HEK293T (cell line): ENCODE measurements at regions of chr5 and their contacts with region 1.

Region 1: DNA sequence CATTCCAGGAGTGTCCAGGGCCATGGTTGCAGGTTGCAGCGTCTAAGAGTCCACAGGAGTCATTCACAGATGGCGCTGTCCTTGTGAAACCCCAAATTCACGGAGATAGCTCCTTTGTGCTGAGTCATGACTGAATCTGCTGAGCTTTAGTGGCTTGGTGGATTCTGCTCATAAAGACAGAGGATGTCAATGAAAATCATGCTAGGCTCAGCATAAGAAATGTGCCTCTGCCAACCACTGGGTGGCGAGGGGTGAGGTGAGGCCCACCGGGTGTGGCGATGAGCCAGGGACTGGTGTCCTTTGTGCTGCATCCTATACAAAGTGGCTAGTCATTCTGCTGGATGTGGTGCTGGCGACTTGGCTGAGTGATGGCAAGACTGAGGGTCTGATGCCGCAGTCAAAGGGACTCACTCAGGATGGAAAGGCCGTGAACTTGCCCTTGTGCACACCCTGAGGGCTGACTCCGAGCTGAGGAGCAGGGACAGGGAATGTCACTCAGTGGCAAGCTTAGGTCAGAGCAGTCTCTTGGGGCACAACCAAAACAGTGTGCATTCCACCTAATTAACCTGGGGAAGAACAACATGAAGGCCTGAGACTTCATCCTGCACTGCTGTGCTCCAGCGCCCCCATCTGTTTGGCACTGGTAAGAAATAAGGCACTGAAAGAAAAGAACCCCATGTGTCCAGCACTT is 71.5 kb downstream of the DAP start:
- DNase-seq: peak; percentile 31

Region 2: DNA sequence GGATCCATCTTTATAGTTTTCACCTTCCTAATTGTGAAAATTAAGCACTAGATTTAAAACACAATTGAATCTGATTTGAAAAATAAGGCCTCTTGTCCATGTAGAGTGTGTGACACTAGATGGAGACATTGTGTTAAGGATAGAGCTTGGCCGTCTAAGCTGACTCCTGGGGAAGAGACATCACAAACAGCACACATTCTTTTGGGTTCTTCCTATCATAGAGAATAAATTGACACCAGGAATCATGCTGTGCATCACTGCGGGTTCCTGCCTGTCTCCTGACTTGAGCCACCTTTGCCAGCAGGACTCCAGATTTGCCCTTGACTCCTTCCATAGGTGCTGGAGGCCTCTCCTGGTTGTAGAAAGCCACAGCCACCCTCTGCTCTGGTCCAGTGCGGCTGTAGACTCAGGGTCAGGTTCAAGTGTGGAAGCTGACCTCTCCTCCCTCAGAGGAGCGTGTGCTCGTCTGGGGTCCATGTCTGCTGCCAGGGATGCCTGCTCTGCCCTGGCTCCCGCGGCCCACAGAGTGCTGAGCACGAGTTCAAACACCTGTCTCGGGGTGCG is 236.7 kb before region 1 on chr5:
- CTCF ChIA-PET with region 1: interaction called, 10 read pairs
- POLR2A ChIA-PET with region 1: no interaction called
- DNase-seq: peak; percentile 73